ENCODE measurements at regions of chr5 and their contacts with region 1.

Region 1: DNA sequence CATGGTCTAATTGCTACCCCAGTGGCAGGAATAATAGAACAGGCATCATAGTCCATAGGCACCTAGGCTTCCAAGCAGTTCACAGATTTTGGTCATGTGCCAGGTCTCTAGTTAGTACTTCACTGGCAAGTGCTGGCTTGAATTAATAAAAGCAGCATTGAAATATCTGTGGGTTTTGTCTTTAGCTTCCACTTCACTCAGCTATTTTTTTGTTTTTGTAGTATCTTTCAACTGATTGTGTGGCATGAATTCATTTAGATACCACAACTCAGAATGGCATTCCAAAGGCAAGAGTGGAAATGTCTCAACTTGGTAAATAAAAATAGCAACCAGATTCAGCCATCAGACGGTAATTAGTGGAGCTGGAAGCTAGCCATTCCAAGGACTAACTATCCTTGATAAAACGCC is 27.9 kb upstream of the ITGA2 start:
- DNase-seq: no peak
- ATAC-seq: no peak
- H3K4me3 ChIP-seq: no peak overlapping the region
- H3K27ac ChIP-seq: no peak overlapping the region
- H3K4me1 ChIP-seq: peaks cover 3% of the 10 kb centered on the region; the same call in 1 of the 2 replicates
- H3K27me3 ChIP-seq: no peaks in the 10 kb centered on the region
- CTCF ChIP-seq: no peak
- POLR2A ChIP-seq: no peak
- RAD21 ChIP-seq: no peak

Region 2: GRCh38 chr5:53069626-53070025 is 108.3 kb after region 1 on chr5:
- CTCF ChIA-PET with region 1: interaction called, 3 read pairs
- POLR2A ChIA-PET with region 1: no interaction called
- dilution Hi-C with region 1: loop called (anchors 25 kb)
- in situ Hi-C with region 1: no loop called
- intact Hi-C with region 1: no loop called
- DNase-seq: peak; percentile 83
- ATAC-seq: 0 out of 2 replicates have a peak, but pooled peaks have one; percentile 18
- H3K4me3 ChIP-seq: no peak overlapping the region
- H3K27ac ChIP-seq: no peak overlapping the region
- H3K4me1 ChIP-seq: peaks cover 5% of the 10 kb centered on the region
- H3K27me3 ChIP-seq: no peaks in the 10 kb centered on the region
- CTCF ChIP-seq: no peak
- POLR2A ChIP-seq: no peak
- RAD21 ChIP-seq: no peak

Measured in IMR-90 (cell line).